BJ (cell line): ENCODE measurements at regions of chr2 and their contacts with region 1.

Region 1: DNA sequence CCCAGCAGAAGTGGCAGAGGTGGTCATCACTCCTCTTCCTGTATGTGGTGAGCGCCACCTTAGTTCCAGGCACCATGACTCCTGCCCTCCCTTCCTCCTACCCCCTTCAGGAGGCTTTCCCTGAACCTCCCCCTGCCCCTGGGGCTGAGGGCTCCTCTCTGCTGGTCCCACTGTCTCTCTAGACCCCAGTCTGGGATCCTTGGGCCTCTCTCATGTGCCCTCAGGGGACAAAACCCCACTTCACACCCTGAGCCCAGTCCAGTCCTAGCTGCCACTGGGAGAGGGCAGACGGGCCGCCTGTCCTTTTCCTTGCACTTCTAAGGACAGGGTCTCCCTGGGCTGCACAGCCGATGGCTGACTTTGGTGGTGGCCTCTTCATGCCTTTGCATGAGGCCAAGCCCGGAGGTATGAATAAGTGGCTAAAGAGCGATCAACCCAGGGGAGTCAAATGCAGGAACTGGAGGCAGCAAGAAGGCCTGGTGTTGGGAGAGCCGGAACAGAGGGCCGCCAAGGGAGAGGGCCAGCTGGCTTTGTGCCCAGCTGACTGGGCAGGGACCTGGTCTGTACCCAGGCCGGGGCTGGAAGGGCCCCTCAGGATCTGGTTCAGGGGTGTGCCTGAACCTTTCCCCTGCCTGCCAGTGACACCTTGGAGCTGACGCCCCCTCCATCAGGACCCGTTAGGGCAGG is 29.5 kb downstream of the GLI2 start:
- DNase-seq: no peak
- H3K4me3 ChIP-seq: no peak overlapping the region
- H3K27me3 ChIP-seq: no peaks in the 10 kb centered on the region
- CTCF ChIP-seq: no peak

Region 2: DNA sequence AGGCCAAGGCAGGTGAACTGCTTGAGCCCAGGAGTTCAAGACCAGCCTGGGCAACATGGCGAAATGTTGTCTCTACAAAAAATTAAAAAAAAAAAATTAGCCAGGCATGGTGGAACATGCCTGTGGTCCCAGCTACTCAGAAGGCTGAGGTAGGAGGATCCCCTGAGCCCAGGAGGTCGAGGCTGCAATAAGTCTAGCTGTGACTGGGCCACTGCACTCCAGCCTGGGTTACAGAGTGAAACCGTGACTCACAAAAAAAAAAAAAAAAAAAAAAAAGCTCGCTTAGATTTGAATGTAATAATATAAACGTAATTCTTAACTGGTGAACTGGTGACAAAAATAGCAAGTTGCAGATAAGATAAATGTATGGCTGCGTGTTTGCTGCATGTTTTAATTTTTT is 463.4 kb after region 1 on chr2:
- CTCF ChIA-PET with region 1: no interaction called
- POLR2A ChIA-PET with region 1: interaction called, 10 read pairs
- DNase-seq: no peak
- H3K4me3 ChIP-seq: no peak overlapping the region
- H3K27me3 ChIP-seq: peaks cover 2% of the 10 kb centered on the region; the same call in 1 of the 2 replicates
- CTCF ChIP-seq: no peak